ENCODE measurements at regions of chr16 and their contacts with region 1.

Region 1: DNA sequence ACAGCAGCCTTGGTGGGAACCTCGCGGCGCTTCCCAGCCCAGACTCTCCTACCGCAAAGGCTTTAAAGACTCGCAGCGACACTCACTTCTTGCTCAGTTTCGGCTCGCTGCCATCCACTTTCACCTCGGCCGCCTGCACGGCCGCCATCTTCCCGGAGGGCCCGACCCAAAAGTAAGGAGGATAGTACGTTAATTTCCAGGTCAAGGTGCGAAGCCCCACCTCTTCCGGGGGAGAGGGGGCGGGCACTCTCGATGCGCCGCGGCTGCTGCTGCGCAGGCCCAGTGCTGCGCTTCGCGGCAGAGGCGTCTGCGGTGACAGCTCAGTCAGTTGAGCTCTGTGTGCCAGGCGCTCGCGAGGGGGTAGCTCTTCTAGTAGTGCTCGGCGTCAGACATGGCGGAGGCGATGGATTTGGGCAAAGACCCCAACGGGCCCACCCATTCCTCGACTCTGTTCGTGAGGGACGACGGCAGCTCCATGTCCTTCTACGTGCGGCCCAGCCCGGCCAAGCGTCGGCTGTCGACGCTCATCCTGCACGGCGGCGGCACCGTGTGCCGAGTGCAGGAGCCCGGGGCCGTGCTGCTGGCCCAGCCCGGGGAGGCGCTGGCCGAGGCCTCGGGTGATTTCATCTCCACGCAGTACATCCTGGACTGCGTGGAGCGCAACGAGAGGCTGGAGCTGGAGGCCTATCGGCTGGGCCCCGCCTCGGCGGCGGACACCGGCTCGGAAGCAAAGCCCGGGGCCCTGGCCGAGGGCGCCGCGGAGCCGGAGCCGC is at the starts of genes KARS1 and TERF2IP:
- DNase-seq: peak; percentile 92 to 97 (median 95)
- H3K4me3 ChIP-seq: peak within 1 kb of the TSS; percentile 81
- H3K4me3 Mint-ChIP-seq: peak within 1 kb of the TSS; percentile 95 to 100 (median 99)
- H3K27ac ChIP-seq: peak within 1 kb of the TSS; percentile 97
- H3K27ac Mint-ChIP-seq: peak within 1 kb of the TSS; percentile 97 to 100 (median 99)
- H3K4me1 ChIP-seq: peaks cover 53% of the 10 kb centered on the region
- H3K4me1 Mint-ChIP-seq: peaks cover 61 to 73% (median 69%) of the 10 kb centered on the region in 3 donors
- H3K27me3 ChIP-seq: no peaks in the 10 kb centered on the region
- H3K27me3 Mint-ChIP-seq: peaks cover 0 to 2% of the 10 kb centered on the region in 2 donors
- total RNA-seq, gene KARS1: 291 to 307 TPM
- total RNA-seq, gene TERF2IP: 90.6 to 91.0 TPM

Region 2: GRCh38 chr16:75464130-75464918 is 183.4 kb before region 1 on chr16 and contains the start of gene TMEM170A:
- CTCF ChIA-PET with region 1: interaction called, 17 read pairs
- POLR2A ChIA-PET with region 1: interaction called, 10 read pairs
- DNase-seq: peak; percentile 98 to 99 (median 99)
- H3K4me3 ChIP-seq: peak within 1 kb of the TSS; percentile 91
- H3K4me3 Mint-ChIP-seq: peak within 1 kb of the TSS; percentile 88 to 98 (median 92)
- H3K27ac ChIP-seq: peak within 1 kb of the TSS; percentile 96
- H3K27ac Mint-ChIP-seq: peak within 1 kb of the TSS; percentile 93 to 99 (median 94)
- H3K4me1 ChIP-seq: peaks cover 30% of the 10 kb centered on the region
- H3K4me1 Mint-ChIP-seq: peaks cover 44 to 49% (median 48%) of the 10 kb centered on the region in 3 donors
- H3K27me3 ChIP-seq: no peaks in the 10 kb centered on the region
- H3K27me3 Mint-ChIP-seq: peaks cover 0 to 4% of the 10 kb centered on the region in 2 donors
- total RNA-seq, gene TMEM170A: 40.9 to 41.8 TPM

Region 3: GRCh38 chr16:75566040-75566810 is 81.5 kb before region 1 on chr16 and contains the start of gene GABARAPL2:
- CTCF ChIA-PET with region 1: interaction called, 10 read pairs
- POLR2A ChIA-PET with region 1: interaction called, 23 read pairs
- DNase-seq: peak; percentile 89 to 94 (median 91)
- H3K4me3 ChIP-seq: peak within 1 kb of the TSS; percentile 85
- H3K4me3 Mint-ChIP-seq: peak within 1 kb of the TSS; percentile 92 to 100 (median 96)
- H3K27ac ChIP-seq: peak within 1 kb of the TSS; percentile 83
- H3K27ac Mint-ChIP-seq: peak within 1 kb of the TSS; percentile 89 to 100 (median 98)
- H3K4me1 ChIP-seq: peaks cover 36% of the 10 kb centered on the region
- H3K4me1 Mint-ChIP-seq: peaks cover 43 to 58% (median 54%) of the 10 kb centered on the region in 3 donors
- H3K27me3 ChIP-seq: no peaks in the 10 kb centered on the region
- H3K27me3 Mint-ChIP-seq: peaks cover 7 to 14% of the 10 kb centered on the region in 2 donors
- total RNA-seq, gene GABARAPL2: 61.7 to 66.2 TPM

Region 4: GRCh38 chr16:75622761-75623605 is 24.7 kb before region 1 on chr16 and contains the start of gene ADAT1:
- CTCF ChIA-PET with region 1: interaction called, 46 read pairs
- POLR2A ChIA-PET with region 1: interaction called, 148 read pairs
- DNase-seq: peak; percentile 96 to 99 (median 98)
- H3K4me3 ChIP-seq: peak within 1 kb of the TSS; percentile 75
- H3K4me3 Mint-ChIP-seq: peak within 1 kb of the TSS; percentile 95 to 99 (median 96)
- H3K27ac ChIP-seq: peak within 1 kb of the TSS; percentile 96
- H3K27ac Mint-ChIP-seq: peak within 1 kb of the TSS; percentile 95 to 100 (median 98)
- H3K4me1 ChIP-seq: peaks cover 60% of the 10 kb centered on the region
- H3K4me1 Mint-ChIP-seq: peaks cover 64 to 86% (median 78%) of the 10 kb centered on the region in 3 donors
- H3K27me3 ChIP-seq: no peaks in the 10 kb centered on the region
- H3K27me3 Mint-ChIP-seq: no peaks in the 10 kb centered on the region
- total RNA-seq, gene ADAT1: 57.9 to 59.8 TPM

Region 5: DNA sequence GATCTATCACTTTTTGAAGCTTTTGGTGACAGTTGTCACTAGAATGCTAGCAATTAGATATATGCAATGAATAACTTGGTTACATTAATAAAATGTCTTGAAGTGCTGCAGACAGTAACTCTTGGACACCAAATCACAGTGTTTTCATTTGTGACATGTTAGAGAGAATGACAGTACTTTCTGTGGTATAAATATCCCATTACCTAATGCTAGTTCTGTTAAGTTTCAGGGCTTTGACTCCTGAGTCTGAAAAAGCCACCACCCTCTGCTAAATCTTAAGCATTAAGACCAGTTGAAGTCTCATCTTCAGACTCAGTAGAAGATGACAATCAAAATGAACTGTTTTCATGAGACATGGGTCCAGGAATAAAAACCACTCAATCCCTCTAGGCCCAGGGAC is 39.7 kb after region 1 on chr16:
- CTCF ChIA-PET with region 1: no interaction called
- POLR2A ChIA-PET with region 1: no interaction called
- DNase-seq: no peak
- H3K4me3 ChIP-seq: no peak overlapping the region
- H3K4me3 Mint-ChIP-seq: no peak overlapping the region
- H3K27ac ChIP-seq: no peak overlapping the region
- H3K27ac Mint-ChIP-seq: peak overlapping the region in 1 of 8 donors; percentile 22
- H3K4me1 ChIP-seq: no peaks in the 10 kb centered on the region
- H3K4me1 Mint-ChIP-seq: peaks cover 0 to 10% (median 5%) of the 10 kb centered on the region in 3 donors
- H3K27me3 ChIP-seq: no peaks in the 10 kb centered on the region
- H3K27me3 Mint-ChIP-seq: no peaks in the 10 kb centered on the region

Measured in CD8-positive, alpha-beta memory T cell (primary cell).